ENCODE measurements at regions of chrX and their contacts with region 1.

Region 1: DNA sequence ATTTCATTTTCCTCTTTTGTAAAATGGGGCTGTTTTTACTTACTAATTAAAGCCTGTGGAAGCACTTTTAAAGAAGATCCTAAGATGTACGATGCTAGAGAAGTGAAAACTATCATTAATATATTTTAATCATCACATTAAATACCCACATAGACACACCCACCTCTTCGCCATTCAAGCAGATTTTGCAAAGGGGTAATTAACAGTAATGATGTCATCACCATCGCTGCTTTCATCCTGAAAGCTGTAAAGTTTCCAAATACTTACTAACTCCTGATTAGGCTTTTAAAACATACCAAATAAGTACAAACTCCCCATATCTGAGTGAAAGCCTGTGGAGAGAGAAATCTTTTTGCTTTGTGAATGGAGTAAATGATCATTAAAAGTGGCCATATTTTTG is 17.6 kb upstream of the NYX start:
- DNase-seq: no peak
- ATAC-seq: no peak
- H3K4me3 ChIP-seq: no peak overlapping the region
- H3K27ac ChIP-seq: no peak overlapping the region
- H3K4me1 ChIP-seq: no peaks in the 10 kb centered on the region
- H3K27me3 ChIP-seq: no peaks in the 10 kb centered on the region
- CTCF ChIP-seq: no peak

Region 2: DNA sequence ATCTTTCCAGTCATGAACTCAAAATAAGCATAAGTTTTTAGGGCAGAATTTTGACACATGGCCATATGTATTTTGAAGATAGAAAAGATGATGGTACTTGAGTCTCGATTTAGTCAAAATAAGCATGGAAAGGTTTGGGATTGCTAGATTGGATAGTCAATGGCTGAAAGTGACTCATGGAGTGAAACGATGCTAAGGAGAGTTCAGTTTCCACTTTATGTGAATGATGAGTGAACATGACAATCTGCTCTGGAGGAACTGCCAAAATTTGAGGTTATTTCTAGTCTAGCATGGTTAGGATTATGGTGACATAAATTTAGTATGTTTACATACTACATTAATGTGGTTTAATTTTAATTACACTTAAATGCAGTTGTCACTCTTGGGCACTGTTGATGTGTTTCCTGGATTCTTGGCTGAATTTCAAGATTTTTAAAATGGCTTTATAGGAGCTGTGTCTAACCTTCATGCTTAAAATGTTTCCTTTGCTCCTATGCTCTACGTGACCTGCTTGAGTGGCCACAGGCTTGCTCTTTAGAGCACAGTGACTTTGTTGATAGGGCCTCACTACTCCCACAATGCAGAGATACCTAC is 78.5 kb before region 1 on chrX:
- CTCF ChIA-PET with region 1: no interaction called
- POLR2A ChIA-PET with region 1: no interaction called
- in situ Hi-C with region 1: no loop called
- intact Hi-C with region 1: no loop called
- DNase-seq: no peak
- ATAC-seq: peak; percentile 59
- H3K4me3 ChIP-seq: no peak overlapping the region
- H3K27ac ChIP-seq: no peak overlapping the region
- H3K4me1 ChIP-seq: no peaks in the 10 kb centered on the region; the same call in 1 of the 2 replicates
- H3K27me3 ChIP-seq: no peaks in the 10 kb centered on the region
- CTCF ChIP-seq: no peak

Region 3: GRCh38 chrX:41441934-41442823 is 12.6 kb after region 1 on chrX:
- CTCF ChIA-PET with region 1: no interaction called
- POLR2A ChIA-PET with region 1: interaction called, 15 read pairs
- in situ Hi-C with region 1: no loop called
- intact Hi-C with region 1: no loop called
- DNase-seq: peak; percentile 45
- ATAC-seq: peak; percentile 95
- H3K4me3 ChIP-seq: peak overlapping the region; percentile 38 to 42
- H3K27ac ChIP-seq: peak overlapping the region; percentile 70
- H3K4me1 ChIP-seq: peaks cover 3% of the 10 kb centered on the region; the same call in 1 of the 2 replicates
- H3K27me3 ChIP-seq: no peaks in the 10 kb centered on the region
- CTCF ChIP-seq: peak; percentile 84

Region 4: DNA sequence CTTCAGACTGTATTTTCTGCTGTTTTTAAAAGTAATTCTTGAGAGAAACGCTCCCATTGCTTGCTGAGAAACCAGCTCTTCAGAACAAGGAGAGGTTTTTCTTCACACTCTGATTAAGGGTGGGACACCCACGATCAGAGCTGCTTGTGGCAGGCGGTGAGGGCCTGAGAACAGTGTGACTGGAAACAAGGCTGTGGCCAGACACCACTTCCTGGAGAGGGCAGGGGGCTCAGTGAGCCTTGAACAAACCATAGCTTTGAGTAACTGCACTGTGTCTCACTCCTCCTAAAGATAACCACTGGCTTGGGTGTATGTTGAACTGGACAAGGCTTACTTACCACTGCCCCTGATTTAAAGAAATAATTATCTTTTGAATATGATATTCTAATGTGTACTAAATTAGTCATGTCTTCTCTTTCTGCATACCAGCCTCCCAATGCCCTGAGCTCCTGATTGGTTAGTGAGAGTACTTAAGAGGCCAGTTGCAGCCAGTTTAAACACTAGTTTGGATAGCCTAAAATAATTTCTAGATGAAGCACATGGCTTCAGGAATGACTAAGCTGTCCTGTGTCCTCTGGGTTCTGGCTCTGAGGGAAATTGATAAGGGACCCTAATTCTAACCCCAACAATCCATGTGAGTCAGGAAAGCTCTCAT is 290.7 kb after region 1 on chrX:
- CTCF ChIA-PET with region 1: no interaction called
- POLR2A ChIA-PET with region 1: no interaction called
- in situ Hi-C with region 1: no loop called
- intact Hi-C with region 1: no loop called
- DNase-seq: no peak
- ATAC-seq: no peak
- H3K4me3 ChIP-seq: no peak overlapping the region
- H3K27ac ChIP-seq: no peak overlapping the region
- H3K4me1 ChIP-seq: no peaks in the 10 kb centered on the region
- H3K27me3 ChIP-seq: no peaks in the 10 kb centered on the region
- CTCF ChIP-seq: no peak